ENCODE measurements at regions of chr4 and their contacts with region 1.

Region 1: DNA sequence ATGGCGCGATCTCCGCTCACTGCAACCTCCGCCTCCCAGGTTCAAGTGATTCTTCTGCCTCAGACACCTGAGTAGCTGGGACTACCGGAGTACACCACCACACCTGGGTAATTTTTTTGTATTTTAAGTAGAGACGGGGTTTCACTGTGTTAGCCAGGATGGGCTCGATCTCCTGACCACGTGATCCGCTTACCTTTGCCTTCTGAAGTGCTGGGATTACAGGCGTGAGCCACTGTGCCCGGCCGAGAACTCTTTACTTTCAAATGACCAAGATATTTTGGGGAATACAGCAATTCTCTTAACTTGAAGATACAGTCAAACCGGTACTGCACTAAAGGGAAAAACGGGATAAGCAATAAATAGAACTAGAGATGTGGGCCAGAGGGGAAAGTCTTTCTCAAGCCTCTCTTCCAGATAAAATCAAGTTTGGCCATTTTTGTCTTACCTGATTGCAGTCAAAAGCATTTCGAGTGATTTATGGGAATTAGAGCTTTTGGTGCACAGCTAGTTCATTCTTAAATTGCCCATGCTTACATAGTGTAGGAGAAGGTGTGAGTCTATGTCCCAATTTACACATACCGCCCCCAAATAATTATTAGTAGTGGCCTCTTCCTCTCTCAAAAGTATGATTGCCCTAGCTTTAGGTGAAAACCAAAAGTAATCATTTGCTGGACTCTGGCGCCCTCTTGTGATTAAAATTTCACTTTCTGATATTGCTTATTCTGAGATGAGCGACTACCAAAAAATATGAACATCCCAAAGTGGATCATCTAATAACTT is 53.2 kb upstream of the ABCG2 start:
- DNase-seq: peak; percentile 28 to 64
- H3K4me3 ChIP-seq: no peak overlapping the region
- H3K4me1 ChIP-seq: no peaks in the 10 kb centered on the region
- H3K27me3 ChIP-seq: peaks cover 7% of the 10 kb centered on the region; the same call in 1 of the 2 replicates

Region 2: DNA sequence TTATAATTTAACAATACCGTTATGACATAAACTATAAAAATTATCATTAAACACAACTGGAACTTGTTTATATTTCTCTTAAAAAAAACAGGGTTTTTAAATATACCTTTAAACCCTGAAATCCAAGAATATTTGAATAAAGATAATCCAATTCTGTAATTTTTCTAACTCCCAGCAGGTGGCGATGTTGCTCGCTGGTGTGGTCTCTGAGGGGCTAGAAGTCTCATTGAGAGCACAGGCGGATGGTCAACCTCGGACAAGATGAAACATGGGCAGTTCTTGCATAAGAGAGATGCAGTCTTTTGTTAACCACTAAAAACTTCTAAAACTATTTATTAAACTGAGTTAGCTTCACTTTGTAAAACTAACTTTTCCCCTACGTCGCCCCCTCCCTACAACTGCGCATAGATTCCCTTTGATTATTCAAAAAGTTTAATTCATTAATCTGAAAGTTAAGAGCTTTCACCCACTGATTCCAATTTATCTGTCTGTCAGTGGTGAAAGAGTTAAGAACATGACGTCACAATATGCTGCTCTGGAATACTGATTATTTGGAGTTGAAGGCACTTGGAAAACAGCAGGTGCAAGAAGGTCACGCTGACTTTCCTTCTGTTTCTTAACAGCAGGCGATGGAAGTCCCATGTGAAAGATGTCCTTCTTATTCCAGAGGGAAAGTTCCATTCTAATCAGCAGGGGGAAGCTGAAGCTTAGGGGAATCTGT is 532.1 kb before region 1 on chr4:
- in situ Hi-C with region 1: loop called (anchors 25 kb)
- DNase-seq: peak; percentile 44 to 65
- H3K4me3 ChIP-seq: no peak overlapping the region
- H3K4me1 ChIP-seq: no peaks in the 10 kb centered on the region
- H3K27me3 ChIP-seq: no peaks in the 10 kb centered on the region

Region 3: DNA sequence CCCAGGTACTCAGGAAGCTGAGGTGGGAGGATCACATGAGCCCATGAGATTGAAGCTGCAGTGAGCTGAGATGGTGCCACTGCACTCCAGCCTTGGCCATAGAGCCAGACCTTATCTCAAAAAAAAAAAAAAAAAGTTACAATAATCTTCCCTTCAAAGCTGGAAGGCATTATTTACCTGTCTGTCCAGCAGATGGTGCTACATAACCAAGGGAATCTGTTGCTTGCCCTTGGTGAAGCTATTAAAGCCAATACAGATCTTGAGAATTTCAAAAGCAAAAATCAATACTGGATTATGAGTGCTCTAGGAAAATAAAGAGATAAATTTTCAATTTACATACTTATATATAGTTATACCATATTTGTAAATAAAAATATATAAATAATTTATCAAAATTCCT is 178.4 kb before region 1 on chr4:
- in situ Hi-C with region 1: loop called (anchors 5 kb)
- DNase-seq: peak; percentile 63 to 66
- H3K4me3 ChIP-seq: no peak overlapping the region
- H3K4me1 ChIP-seq: no peaks in the 10 kb centered on the region
- H3K27me3 ChIP-seq: no peaks in the 10 kb centered on the region

Region 4: DNA sequence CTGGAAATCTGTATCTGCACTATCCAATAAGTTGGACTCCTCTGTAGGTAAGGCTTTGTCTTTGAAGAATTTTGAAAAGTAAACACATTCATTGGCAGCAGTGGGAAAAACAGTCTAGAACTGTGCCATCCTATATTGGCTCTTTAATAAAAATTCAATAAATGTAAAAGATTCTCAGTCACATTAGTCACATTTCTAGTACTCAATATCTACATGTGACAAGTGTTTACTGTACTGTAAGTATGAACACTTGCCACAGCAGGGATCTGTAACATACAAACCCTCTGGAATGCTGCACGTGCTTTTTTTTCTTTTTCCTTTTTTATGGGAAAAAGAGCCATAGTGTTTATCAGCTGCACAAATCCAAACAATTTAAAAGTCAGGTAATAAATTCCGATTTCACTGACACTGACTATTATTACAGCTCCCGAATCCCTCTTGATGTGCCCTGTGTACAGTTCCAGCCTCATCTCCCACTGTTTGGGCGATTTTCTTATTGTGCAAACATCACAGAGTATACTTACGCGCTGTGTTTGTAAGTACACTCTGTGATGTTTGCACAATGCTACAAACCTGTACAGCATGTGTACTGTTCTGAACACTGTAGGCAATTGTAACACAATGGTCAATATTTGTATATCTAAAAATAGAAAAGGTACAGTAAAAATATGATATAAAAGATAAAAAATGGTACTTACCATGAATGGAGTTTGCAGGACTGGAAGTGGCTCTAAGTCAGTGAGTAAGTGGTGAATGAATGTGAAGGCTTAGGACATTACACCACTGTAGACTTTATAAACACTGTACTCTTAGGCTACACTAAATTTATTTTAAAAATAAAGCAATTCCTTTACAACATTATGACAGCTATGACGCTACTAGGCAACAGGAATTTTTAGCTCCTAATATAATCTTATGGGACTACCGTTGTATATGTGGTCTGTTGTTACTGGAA is 303.2 kb after region 1 on chr4:
- in situ Hi-C with region 1: loop called (anchors 5 kb)
- DNase-seq: no peak
- H3K4me3 ChIP-seq: no peak overlapping the region
- H3K4me1 ChIP-seq: peaks cover 9% of the 10 kb centered on the region
- H3K27me3 ChIP-seq: no peaks in the 10 kb centered on the region